Activated CD4-positive, alpha-beta T cell treated with anti-CD3 and anti-CD28 coated beads for 36 hours (primary cell): ENCODE measurements at regions of chr10 and their contacts with region 1.

Region 1: GRCh38 chr10:96073722-96074121 is 30.3 kb downstream of the CCNJ start:
- DNase-seq: peak; percentile 15
- ATAC-seq: peak; percentile 99
- H3K4me3 Mint-ChIP-seq: no peak overlapping the region
- H3K27ac Mint-ChIP-seq: peak overlapping the region; percentile 75
- H3K4me1 Mint-ChIP-seq: peaks cover 20% of the 10 kb centered on the region
- H3K27me3 Mint-ChIP-seq: no peaks in the 10 kb centered on the region

Region 2: GRCh38 chr10:95963226-95963990 is 110.3 kb before region 1 on chr10:
- CTCF ChIA-PET with region 1: no interaction called
- POLR2A ChIA-PET with region 1: no interaction called
- intact Hi-C with region 1: no loop called
- DNase-seq: no peak
- ATAC-seq: peak; percentile 70
- H3K4me3 Mint-ChIP-seq: no peak overlapping the region
- H3K27ac Mint-ChIP-seq: peak overlapping the region; percentile 79
- H3K4me1 Mint-ChIP-seq: peaks cover 20% of the 10 kb centered on the region
- H3K27me3 Mint-ChIP-seq: peaks cover 2% of the 10 kb centered on the region

Region 3: GRCh38 chr10:96038476-96039387 is 35.0 kb before region 1 on chr10:
- CTCF ChIA-PET with region 1: no interaction called
- POLR2A ChIA-PET with region 1: no interaction called
- intact Hi-C with region 1: no loop called
- DNase-seq: no peak
- ATAC-seq: no peak
- H3K4me3 Mint-ChIP-seq: no peak overlapping the region
- H3K27ac Mint-ChIP-seq: no peak overlapping the region
- H3K4me1 Mint-ChIP-seq: peaks cover 9% of the 10 kb centered on the region
- H3K27me3 Mint-ChIP-seq: peaks cover 6% of the 10 kb centered on the region

Region 4: GRCh38 chr10:96061232-96061631 is 12.5 kb before region 1 on chr10:
- CTCF ChIA-PET with region 1: interaction called, 3 read pairs
- POLR2A ChIA-PET with region 1: no interaction called
- intact Hi-C with region 1: loop called (anchors 1 kb)
- DNase-seq: no peak
- ATAC-seq: no peak
- H3K4me3 Mint-ChIP-seq: no peak overlapping the region
- H3K27ac Mint-ChIP-seq: no peak overlapping the region
- H3K4me1 Mint-ChIP-seq: peaks cover 21% of the 10 kb centered on the region
- H3K27me3 Mint-ChIP-seq: no peaks in the 10 kb centered on the region